Vagina (tissue), 2 donors: ENCODE measurements at regions of chr5 and their contacts with region 1.

Region 1: DNA sequence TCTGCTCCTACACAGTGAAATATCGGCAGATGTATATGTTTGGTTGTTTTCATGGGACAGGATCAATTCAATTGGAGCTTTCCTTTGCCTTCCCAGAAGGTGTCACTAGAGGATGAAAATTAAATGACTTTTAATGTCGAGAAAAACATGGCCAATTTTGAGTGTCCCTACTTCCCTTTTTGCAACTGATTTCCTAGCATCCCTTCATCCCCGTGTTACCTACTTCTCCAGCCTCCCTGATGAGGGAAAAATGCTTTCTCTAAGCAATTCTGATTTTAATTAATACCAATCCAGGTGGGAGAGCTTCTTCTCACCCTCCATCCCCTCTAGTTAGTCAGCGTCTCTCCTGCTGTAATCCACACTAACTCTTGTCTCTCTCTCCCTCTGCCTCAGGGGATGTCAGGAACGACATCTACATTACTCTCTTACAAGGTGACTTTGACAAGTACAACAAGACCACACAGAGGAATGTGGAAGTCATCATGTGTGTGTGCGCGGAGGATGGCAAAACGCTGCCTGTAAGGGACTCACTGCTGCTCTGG is 64.9 kb downstream of the DOCK2 start:
- DNase-seq: no peak
- H3K4me3 ChIP-seq: no peak overlapping the region
- H3K27ac ChIP-seq: no peak overlapping the region
- H3K4me1 ChIP-seq: no peaks in the 10 kb centered on the region
- H3K27me3 ChIP-seq: no peaks in the 10 kb centered on the region
- CTCF ChIP-seq: no peak
- POLR2A ChIP-seq: no peak

Region 2: DNA sequence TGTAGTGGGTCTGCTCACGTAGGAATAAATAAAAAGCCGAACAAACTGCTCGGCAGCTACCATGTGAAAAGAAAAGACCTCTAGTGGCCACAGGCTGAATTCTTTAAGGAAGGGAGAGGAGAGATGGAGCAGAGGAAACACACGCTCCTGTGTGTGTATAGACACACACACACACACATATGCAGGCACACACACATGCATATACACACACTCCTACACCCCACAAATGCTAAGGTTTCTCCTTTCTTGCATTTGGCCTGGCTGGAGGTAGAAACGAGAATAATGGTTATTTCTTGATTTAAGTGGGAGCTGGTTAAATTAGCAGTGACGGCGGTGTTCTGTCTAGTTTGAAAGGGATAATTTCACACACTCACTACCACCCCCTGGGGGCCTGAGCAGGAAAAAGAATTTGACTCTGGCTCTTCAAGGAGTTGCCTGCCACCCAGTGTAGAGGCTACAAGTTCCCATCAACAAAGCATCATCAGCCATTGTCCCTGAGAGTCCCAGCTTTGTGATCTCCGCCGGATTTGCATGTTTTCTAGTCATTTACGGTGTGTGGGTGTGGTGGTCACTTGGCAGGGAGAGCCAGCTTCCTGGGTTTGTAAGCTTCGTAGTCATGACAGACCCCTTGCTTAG is 278.6 kb after region 1 on chr5 and contains the start of gene INSYN2B:
- intact Hi-C with region 1: loop called (anchors 10 kb)
- DNase-seq: no peak
- H3K4me3 ChIP-seq: no peak within 1 kb of the TSS
- H3K27ac ChIP-seq: no peak within 1 kb of the TSS
- H3K4me1 ChIP-seq: no peaks in the 10 kb centered on the region
- H3K27me3 ChIP-seq: no peaks in the 10 kb centered on the region
- CTCF ChIP-seq: peak; percentile 24 to 56 (median 36)
- POLR2A ChIP-seq: no peak
- total RNA-seq, gene INSYN2B: 0.25 TPM